ENCODE measurements at regions of chr4 and their contacts with region 1.

Region 1: DNA sequence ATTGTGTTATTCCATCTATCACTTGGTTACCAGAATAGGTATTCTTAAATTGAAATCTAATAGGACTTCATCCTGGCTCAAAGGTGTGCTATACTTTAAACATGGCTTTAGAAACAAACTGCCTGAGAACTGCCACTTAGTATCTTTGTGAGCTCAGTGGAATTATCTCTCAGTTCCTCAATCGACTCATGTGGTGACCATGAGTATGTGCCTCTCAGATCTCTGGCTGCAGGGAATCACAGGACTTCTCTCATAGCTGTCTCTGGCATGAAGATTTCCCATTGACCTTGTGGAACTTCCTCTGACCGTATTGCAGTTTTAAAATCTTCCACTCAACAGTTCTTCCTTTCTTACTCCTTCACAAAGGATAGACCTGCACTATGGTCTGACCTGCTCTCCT is 681.9 kb upstream of the BOD1L1 start:
- DNase-seq: no peak
- H3K4me3 ChIP-seq: no peak overlapping the region
- H3K27ac ChIP-seq: no peak overlapping the region
- H3K4me1 ChIP-seq: no peaks in the 10 kb centered on the region
- H3K27me3 ChIP-seq: no peaks in the 10 kb centered on the region
- CTCF ChIP-seq: no peak
- POLR2A ChIP-seq: no peak

Region 2: GRCh38 chr4:14022456-14022855 is 287.0 kb before region 1 on chr4:
- intact Hi-C with region 1: loop called (anchors 5 kb)
- DNase-seq: no peak
- H3K4me3 ChIP-seq: no peak overlapping the region
- H3K27ac ChIP-seq: no peak overlapping the region
- H3K4me1 ChIP-seq: no peaks in the 10 kb centered on the region
- H3K27me3 ChIP-seq: no peaks in the 10 kb centered on the region
- CTCF ChIP-seq: no peak
- POLR2A ChIP-seq: no peak

Region 3: DNA sequence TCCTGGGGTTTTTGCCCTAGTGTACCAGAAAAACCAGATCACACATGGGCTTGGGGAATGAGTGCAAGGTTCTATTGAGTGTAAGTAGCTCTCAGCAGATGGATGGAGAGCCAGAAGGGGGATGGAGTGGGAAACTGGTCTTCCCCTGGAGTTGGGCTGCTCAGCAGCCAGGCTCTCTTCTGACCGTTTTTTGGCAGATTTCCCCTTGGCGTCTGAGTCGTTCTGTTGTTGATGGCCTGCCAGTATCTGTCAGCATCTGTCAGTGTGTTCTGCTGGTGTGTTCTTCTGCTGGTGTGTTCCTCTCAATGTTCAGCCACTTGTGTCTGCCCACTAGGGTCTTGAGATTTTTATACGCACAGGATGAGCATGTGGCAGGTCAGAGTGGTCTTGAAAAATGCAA is 59.0 kb after region 1 on chr4:
- intact Hi-C with region 1: no loop called
- DNase-seq: no peak
- H3K4me3 ChIP-seq: no peak overlapping the region
- H3K27ac ChIP-seq: no peak overlapping the region
- H3K4me1 ChIP-seq: no peaks in the 10 kb centered on the region
- H3K27me3 ChIP-seq: no peaks in the 10 kb centered on the region
- CTCF ChIP-seq: no peak
- POLR2A ChIP-seq: no peak